Natural killer cell (primary cell): ENCODE measurements at regions of chr15 and their contacts with region 1.

Region 1: GRCh38 chr15:66386204-66387123 is at the start of gene MAP2K1:
- DNase-seq: peak; percentile 97 to 99
- ATAC-seq: peak; percentile 87 to 97 (median 89)
- H3K4me3 ChIP-seq: peak within 1 kb of the TSS; percentile 84
- H3K4me3 Mint-ChIP-seq: peak within 1 kb of the TSS; percentile 99
- H3K27ac ChIP-seq: peak within 1 kb of the TSS; percentile 76
- H3K27ac Mint-ChIP-seq: peak within 1 kb of the TSS; percentile 98 to 99
- H3K4me1 ChIP-seq: peaks cover 42% of the 10 kb centered on the region
- H3K4me1 Mint-ChIP-seq: peaks cover 49 to 53% of the 10 kb centered on the region in 2 donors
- H3K27me3 ChIP-seq: no peaks in the 10 kb centered on the region
- H3K27me3 Mint-ChIP-seq: no peaks in the 10 kb centered on the region
- CTCF ChIP-seq: peak; percentile 82
- total RNA-seq, gene MAP2K1: 45.5 to 49.2 (median 48.9) TPM

Region 2: GRCh38 chr15:66356345-66357236 is 29.9 kb before region 1 on chr15 and contains the start of gene TIPIN:
- intact Hi-C with region 1: loop called (anchors 1 kb)
- DNase-seq: peak; percentile 94 to 99
- ATAC-seq: peak; percentile 96 to 99 (median 97)
- H3K4me3 ChIP-seq: peak within 1 kb of the TSS; percentile 93
- H3K4me3 Mint-ChIP-seq: peak within 1 kb of the TSS; percentile 96
- H3K27ac ChIP-seq: peak within 1 kb of the TSS; percentile 71
- H3K27ac Mint-ChIP-seq: peak within 1 kb of the TSS; percentile 90 to 98
- H3K4me1 ChIP-seq: peaks cover 14% of the 10 kb centered on the region
- H3K4me1 Mint-ChIP-seq: peaks cover 14 to 15% of the 10 kb centered on the region in 2 donors
- H3K27me3 ChIP-seq: no peaks in the 10 kb centered on the region
- H3K27me3 Mint-ChIP-seq: no peaks in the 10 kb centered on the region
- CTCF ChIP-seq: no peak
- total RNA-seq, gene TIPIN: 2.6 to 5.5 (median 5.3) TPM

Region 3: DNA sequence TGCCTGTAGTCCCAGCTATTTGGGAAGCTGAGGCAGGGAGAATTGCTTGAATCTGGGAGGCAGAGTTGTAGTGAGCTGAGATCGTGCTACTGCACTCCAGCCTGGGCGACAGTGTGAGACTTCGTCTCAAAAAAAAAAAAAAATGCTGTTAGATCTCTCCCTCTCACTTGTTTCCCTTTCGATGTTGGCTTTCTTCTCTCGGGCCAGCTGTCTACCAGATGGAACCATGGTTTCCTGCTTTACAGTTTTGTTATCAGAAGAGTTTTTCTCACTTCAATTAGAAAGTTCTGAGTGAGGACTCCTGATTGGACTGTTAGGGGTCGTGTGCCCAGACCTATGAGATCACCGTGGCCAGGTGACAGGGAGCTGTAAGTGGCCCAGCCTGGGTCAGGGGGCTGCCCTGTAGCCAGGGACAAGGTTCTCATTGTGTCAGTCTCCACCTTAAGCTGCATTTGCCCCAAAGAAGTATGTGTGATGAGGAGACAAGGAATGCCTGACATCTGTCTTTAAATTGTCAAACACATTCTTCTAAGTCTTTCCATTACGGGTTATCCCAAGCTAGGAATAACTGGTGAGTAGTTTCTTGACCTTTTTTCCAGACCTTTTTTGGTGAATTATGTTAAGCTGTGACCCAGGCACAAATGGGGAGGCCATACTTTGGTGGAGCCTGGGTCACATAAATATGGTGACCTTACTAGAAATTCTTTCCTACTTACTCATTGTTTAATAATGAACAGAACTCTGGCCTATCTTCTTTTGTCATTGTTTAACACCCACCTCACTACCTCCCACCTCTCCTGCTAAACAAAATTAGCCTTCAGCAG is 85.9 kb after region 1 on chr15:
- intact Hi-C with region 1: loop called (anchors 2 kb)
- DNase-seq: peak; percentile 43 to 81
- ATAC-seq: peak; percentile 91 to 96 (median 94)
- H3K4me3 ChIP-seq: no peak overlapping the region
- H3K4me3 Mint-ChIP-seq: peak overlapping the region; percentile 62
- H3K27ac ChIP-seq: peak overlapping the region; percentile 66
- H3K27ac Mint-ChIP-seq: peak overlapping the region; percentile 87 to 88
- H3K4me1 ChIP-seq: peaks cover 15% of the 10 kb centered on the region
- H3K4me1 Mint-ChIP-seq: peaks cover 31 to 33% of the 10 kb centered on the region in 2 donors
- H3K27me3 ChIP-seq: no peaks in the 10 kb centered on the region
- H3K27me3 Mint-ChIP-seq: no peaks in the 10 kb centered on the region
- CTCF ChIP-seq: no peak

Region 4: GRCh38 chr15:66497502-66498455 is 111.3 kb after region 1 on chr15 and contains the start of gene SNAPC5:
- intact Hi-C with region 1: loop called (anchors 1 kb)
- DNase-seq: peak; percentile 98
- ATAC-seq: peak; percentile 95 to 98 (median 96)
- H3K4me3 ChIP-seq: peak within 1 kb of the TSS; percentile 79
- H3K4me3 Mint-ChIP-seq: peak within 1 kb of the TSS; percentile 92
- H3K27ac ChIP-seq: peak within 1 kb of the TSS; percentile 82
- H3K27ac Mint-ChIP-seq: peak within 1 kb of the TSS; percentile 93 to 97
- H3K4me1 ChIP-seq: peaks cover 25% of the 10 kb centered on the region
- H3K4me1 Mint-ChIP-seq: peaks cover 18 to 36% of the 10 kb centered on the region in 2 donors
- H3K27me3 ChIP-seq: no peaks in the 10 kb centered on the region
- H3K27me3 Mint-ChIP-seq: no peaks in the 10 kb centered on the region
- CTCF ChIP-seq: peak; percentile 99
- total RNA-seq, gene SNAPC5: 17.2 to 25.2 (median 24.3) TPM

Region 5: DNA sequence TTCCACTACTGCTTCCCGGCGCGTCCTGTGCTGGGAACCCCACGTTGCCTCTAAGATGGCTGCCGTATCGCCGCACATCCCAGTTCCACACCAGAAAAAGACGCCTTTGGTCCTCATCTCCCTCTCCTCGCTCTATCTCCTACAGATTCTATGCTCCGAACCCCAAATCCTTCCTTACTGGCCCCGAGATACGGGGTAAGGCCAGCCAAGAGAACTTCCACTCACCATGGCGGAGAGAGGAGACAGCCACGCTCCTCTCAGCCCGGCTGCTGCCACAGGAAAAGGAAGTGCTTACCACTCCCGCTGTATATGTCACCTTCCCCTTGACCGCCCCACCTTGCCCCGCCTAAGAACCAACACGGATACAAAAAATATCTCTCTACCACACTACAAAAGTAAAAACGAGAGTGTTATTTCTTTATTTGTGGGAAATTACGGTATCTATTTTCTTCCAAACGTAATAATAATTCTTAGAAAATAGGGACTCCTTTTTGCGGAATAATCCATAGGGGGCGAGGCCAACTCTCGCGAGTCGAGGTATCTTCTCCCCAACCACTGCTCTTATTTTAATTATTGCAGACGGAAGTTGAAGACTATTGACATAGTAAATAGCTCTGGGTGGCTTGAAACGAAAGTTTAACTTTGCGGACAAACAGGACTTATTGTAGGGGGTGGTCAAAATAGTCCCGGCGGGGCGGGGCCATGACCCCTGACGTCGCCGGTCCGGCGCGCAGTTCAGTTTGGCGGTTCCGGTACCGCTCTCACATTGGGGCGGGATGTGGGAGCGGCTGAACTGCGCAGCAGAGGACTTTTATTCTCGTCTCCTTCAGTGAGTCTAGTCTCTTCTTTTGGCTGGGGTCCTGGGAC is 118.3 kb after region 1 on chr15 and contains the starts of genes RPL4 and ZWILCH:
- intact Hi-C with region 1: loop called (anchors 2 kb)
- DNase-seq: peak; percentile 79 to 91
- ATAC-seq: peak; percentile 84 to 95 (median 87)
- H3K4me3 ChIP-seq: peak within 1 kb of the TSS; percentile 92
- H3K4me3 Mint-ChIP-seq: peak within 1 kb of the TSS; percentile 100
- H3K27ac ChIP-seq: peak within 1 kb of the TSS; percentile 97
- H3K27ac Mint-ChIP-seq: peak within 1 kb of the TSS; percentile 90 to 97
- H3K4me1 ChIP-seq: peaks cover 20% of the 10 kb centered on the region
- H3K4me1 Mint-ChIP-seq: peaks cover 35 to 37% of the 10 kb centered on the region in 2 donors
- H3K27me3 ChIP-seq: no peaks in the 10 kb centered on the region
- H3K27me3 Mint-ChIP-seq: no peaks in the 10 kb centered on the region
- CTCF ChIP-seq: no peak
- total RNA-seq, gene RPL4: 1,109 to 1,293 (median 1,293) TPM
- total RNA-seq, gene ZWILCH: 8.7 to 9.9 (median 9.7) TPM